ENCODE measurements at regions of chr1 and their contacts with region 1.

Region 1: GRCh38 chr1:172005856-172006255 is 164.6 kb downstream of the DNM3 start:
- DNase-seq: peak; percentile 90

Region 2: GRCh38 chr1:172345077-172345476 is 339.2 kb after region 1 on chr1:
- in situ Hi-C with region 1: loop called (anchors 5 kb)
- DNase-seq: no peak

Measured in Caki2 (cell line).